Sciatic nerve (tissue), 2 donors: ENCODE measurements at regions of chr3 and their contacts with region 1.

Region 1: DNA sequence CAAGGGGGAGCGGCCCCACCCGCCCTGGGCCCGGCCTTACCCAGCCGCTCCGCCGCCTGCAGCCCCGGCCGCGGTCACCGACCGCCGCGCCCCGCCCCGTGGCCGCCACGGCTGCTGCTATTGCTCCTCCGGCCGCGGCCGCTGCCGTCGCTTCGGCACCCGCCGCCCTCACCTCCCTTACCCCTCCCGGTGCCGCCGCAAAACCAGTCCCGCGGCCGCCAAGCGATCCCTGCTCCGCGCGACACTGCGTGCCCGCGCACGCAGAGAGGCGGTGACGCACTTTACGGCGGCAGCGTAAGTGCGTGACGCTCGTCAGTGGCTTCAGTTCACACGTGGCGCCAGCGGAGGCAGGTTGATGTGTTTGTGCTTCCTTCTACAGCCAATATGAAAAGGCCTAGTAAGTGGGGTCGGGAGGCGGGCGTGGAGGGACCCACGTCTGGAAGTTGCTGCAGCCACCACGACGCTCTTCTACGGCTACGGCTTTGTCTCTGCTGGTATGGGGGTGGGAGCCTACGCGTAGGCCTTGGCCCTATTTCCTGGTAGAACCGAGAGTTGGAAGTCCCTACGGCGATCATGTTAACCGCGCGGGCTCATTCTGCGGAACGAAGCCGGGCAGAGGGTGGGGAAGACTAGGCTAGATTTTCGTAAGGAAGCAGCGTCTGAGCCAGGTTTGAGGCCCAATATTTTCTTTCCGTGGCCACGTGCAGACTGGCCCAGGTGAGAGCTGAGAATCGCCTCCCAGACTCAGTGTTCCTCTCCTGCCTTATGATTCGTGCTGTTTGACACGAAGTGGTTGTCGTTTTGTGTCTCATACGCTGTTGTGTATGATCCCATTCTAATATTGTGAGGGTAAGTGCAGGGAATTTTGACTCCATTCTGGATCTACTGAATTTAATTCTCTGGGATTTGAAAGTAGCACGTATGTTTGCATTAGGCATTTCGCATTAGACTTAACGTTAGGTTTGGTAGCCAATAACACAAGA is at the starts of genes GNL3 and PBRM1:
- DNase-seq: peak; percentile 95
- ATAC-seq: peak; percentile 96
- total RNA-seq, gene GNL3: 55.4 TPM
- total RNA-seq, gene PBRM1: 82.0 TPM

Region 2: DNA sequence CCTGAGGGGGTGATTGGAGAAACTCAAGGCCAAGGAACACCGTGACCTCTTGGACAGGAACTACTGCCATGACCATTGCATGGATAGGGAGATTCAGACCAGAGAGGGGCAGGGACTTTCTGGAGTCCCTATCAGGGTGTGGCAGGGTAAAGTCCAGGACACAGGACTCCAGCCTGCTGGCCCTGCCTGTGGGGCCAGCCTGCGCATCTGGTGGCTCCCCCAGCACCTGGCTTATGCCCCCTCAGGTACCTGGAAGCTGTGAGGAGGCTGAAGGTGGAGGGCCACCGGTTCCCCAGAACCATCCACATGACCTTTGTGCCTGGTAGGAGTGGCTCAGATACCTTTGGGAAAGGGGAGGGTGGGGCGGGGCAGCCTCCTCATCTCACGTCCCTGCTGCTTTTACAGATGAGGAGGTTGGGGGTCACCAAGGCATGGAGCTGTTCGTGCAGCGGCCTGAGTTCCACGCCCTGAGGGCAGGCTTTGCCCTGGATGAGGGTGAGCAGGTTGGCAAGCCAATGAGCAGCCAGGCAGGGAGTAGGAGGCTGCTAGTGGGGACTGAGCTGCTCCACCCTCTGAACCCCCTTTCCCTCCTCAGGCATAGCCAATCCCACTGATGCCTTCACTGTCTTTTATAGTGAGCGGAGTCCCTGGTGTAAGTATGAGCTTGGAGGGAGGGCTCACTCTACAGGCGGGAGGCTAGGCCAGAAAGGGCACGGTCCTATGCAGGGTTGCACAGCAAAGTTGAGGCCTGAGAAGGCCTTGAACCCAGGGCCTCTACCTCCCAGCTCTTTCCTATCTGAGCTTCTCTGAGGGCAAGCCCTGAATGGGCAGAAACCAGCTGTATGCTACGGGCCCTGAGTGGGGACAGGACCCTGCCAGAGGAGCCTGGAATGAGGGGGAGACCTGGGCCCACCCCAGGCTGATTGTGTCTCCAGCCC is 699.7 kb before region 1 on chr3:
- intact Hi-C with region 1: loop called (anchors 5 kb)
- DNase-seq: no peak
- ATAC-seq: no peak

Region 3: GRCh38 chr3:52181543-52181942 is 504.5 kb before region 1 on chr3:
- intact Hi-C with region 1: no loop called
- DNase-seq: no peak
- ATAC-seq: peak; percentile 42

Region 4: DNA sequence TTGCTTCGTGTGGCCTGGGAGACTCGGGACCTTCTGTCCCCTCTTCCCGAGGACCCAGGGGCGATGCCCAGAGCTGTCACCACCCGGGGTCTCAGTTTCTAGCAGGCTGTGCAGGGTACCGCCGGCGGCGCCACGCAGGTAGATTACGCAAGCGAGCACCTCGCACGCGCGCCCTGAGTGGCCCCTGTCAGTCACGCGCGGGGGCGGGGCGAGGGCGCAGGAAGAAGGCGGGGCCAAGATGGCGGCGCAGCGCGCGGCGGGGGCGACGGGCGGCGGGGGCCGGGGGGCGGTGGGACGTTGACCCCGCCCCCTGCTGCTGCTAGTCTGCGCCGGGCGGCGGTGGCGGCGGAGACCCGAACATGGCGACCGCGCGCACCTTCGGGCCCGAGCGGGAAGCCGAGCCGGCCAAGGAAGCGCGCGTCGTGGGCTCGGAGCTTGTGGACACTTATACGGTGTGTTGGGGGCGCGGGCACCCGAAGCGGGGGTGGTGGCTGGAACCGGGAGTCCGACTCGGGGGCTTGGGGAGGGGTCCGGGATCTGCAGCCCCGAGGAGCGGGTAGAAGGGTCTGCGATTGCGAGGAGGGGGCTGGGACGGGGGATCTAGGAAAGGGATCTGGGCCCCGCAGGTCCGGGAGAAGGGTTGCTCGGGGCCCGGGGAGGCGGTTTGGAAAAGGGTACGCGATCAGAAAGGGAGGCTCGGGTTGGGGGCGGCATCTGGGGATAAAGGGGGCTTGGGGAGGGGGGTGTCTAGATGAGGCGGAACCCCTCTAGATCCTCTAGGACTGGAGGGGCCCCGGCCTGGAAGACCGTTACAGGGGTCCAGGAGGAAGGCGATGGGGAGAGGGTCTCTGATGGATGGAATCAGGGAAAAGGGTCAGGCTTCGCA is 230.5 kb before region 1 on chr3 and contains the start of gene NISCH:
- intact Hi-C with region 1: loop called (anchors 10 kb)
- DNase-seq: peak; percentile 95
- ATAC-seq: peak; percentile 82
- total RNA-seq, gene NISCH: 163 TPM

Region 5: DNA sequence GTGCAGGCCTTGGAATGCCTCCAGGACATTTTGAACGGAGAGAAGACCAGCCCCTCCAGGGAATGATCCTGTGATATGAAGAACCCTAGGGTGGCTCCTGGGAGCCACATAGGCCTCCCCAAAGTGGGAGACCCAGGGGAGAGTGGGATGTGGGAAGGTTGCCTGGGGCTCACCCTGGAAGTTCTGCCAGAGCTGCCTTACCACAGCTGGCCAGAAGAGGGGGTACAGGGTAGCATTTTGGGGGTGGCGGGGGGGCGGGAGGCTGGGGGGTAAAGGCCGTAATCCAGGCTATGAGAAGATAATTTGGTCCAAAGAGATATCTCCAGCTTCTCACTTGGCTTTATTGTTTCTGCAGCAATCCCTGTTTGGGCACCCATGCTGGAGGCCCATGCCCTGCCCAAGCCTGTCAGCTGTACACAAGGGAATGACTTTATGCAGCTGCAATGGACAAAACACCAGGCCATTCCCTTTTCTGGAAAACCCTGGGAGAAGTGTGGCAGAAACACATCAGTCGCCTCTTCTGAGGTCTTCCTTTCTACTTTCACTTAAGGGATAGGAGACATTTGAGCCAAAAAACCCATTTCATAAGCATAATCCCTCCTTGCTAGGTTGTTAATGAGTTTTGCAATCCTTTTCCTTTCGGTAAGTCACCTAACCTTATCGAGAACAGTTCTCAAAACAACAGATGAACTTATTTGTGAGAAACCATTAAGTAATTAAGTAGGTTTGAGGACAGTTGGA is 159.9 kb after region 1 on chr3:
- intact Hi-C with region 1: no loop called
- DNase-seq: no peak
- ATAC-seq: peak; percentile 5